ENCODE measurements at regions of chr17 and their contacts with region 1.

Region 1: DNA sequence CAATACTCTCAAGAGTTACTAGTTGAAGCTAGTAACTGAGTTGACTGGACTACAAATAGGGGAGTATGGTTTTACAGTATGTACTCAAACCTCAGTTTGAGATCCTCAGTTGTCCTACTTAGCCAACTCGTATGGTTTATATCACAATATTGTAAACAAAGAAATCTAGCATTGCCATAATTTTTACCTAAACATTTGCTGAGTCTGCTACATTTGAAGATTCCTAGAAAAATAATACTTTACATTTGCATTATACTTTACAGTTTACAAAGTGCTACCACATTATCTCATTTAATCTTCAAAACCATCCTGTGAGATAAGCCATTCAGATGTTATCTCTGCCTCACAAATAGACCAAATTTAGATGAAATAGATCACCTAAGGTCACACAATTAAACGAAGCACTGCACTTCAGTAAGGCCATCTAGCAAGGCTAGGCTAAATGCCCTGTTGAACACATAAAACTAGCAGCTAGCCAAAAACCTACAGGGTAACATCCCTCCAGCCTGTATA is 16.3 kb downstream of the CBX1 start:
- DNase-seq: no peak
- ATAC-seq: no peak
- H3K4me3 ChIP-seq: no peak overlapping the region
- H3K27ac ChIP-seq: no peak overlapping the region
- H3K4me1 ChIP-seq: peaks cover 3 to 7% of the 10 kb centered on the region in 2 experiments; a peak in 2 of 4 replicates
- H3K27me3 ChIP-seq: no peaks in the 10 kb centered on the region
- CTCF ChIP-seq: no peak
- POLR2A ChIP-seq: no peak
- RAD21 ChIP-seq: no peak

Region 2: GRCh38 chr17:48011405-48012150 is 73.4 kb before region 1 on chr17:
- CTCF ChIA-PET with region 1: no interaction called
- POLR2A ChIA-PET with region 1: no interaction called
- RAD21 ChIA-PET with region 1: no interaction called
- intact Hi-C with region 1: no loop called
- DNase-seq: peak; percentile 35
- ATAC-seq: peak; percentile 89
- H3K4me3 ChIP-seq: peak overlapping the region in 1 of 2 experiments; percentile 44; a peak in 2 of 4 replicates
- H3K27ac ChIP-seq: no peak overlapping the region
- H3K4me1 ChIP-seq: peaks cover 5 to 17% of the 10 kb centered on the region in 2 experiments; a peak in 3 of 4 replicates
- H3K27me3 ChIP-seq: no peaks in the 10 kb centered on the region
- CTCF ChIP-seq: peak; percentile 53 to 89 (median 86); a peak in 5 of 6 replicates
- POLR2A ChIP-seq: no peak
- RAD21 ChIP-seq: peak; percentile 69

Region 3: GRCh38 chr17:48068491-48068961 is 16.5 kb before region 1 on chr17:
- CTCF ChIA-PET with region 1: interaction called, 32 read pairs
- POLR2A ChIA-PET with region 1: interaction called, 5 read pairs
- RAD21 ChIA-PET with region 1: no interaction called
- intact Hi-C with region 1: no loop called
- DNase-seq: no peak
- ATAC-seq: peak; percentile 88
- H3K4me3 ChIP-seq: no peak overlapping the region
- H3K27ac ChIP-seq: no peak overlapping the region
- H3K4me1 ChIP-seq: no peaks in the 10 kb centered on the region
- H3K27me3 ChIP-seq: no peaks in the 10 kb centered on the region
- CTCF ChIP-seq: peak in 2 of 3 experiments; percentile 64 to 66; a peak in 4 of 6 replicates
- POLR2A ChIP-seq: no peak
- RAD21 ChIP-seq: peak; percentile 27; the same call in 1 of the 2 replicates

Region 4: DNA sequence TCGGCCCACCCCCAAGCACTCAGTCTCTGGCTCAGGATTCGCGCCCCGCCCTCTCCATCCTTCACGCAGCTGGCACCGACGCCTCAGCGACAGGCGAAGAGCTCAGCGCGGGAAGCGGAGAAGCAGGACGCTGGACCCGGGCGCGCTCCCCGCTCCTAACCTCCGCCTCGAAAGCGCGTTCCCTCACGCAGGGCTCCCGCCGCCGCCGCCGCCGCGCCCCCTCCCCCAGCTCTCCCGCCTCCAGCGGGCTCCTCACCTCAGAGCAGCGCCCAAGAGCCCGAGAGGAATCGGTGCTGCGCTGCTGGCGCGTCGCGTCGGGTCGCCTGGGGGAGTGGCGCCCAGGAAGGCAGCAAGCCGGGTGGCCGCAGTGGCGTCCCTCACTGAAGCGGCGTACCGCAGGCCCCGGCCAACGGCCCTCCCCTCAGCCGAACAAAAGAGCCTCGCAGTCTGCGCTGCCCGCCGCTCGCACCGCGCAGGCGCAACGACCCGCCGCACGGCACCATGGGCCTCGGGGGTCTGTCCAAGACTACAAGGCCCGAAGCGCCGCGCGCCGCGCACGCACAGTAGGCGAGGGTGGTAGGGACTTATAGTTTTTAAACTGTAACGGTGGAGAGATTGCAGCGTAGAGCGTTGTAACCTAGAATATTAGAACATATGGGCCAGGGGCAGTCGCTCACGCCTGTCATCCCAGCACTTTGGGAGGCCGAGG is 16.2 kb after region 1 on chr17 and contains the start of gene CBX1:
- CTCF ChIA-PET with region 1: interaction called, 19 read pairs
- POLR2A ChIA-PET with region 1: interaction called, 15 read pairs
- RAD21 ChIA-PET with region 1: no interaction called
- intact Hi-C with region 1: no loop called
- DNase-seq: peak; percentile 94
- ATAC-seq: peak; percentile 92
- H3K4me3 ChIP-seq: peak within 1 kb of the TSS; percentile 93 to 94
- H3K27ac ChIP-seq: peak within 1 kb of the TSS; percentile 95
- H3K4me1 ChIP-seq: peaks cover 10 to 29% of the 10 kb centered on the region in 2 experiments
- H3K27me3 ChIP-seq: no peaks in the 10 kb centered on the region
- CTCF ChIP-seq: no peak
- POLR2A ChIP-seq: peak; percentile 67
- RAD21 ChIP-seq: no peak
- total RNA-seq, gene CBX1: 136 TPM

Measured in HCT116 (cell line).